Right ventricle myocardium superior (tissue), 1 donor: ENCODE measurements at regions of chr16 and their contacts with region 1.

Region 1: DNA sequence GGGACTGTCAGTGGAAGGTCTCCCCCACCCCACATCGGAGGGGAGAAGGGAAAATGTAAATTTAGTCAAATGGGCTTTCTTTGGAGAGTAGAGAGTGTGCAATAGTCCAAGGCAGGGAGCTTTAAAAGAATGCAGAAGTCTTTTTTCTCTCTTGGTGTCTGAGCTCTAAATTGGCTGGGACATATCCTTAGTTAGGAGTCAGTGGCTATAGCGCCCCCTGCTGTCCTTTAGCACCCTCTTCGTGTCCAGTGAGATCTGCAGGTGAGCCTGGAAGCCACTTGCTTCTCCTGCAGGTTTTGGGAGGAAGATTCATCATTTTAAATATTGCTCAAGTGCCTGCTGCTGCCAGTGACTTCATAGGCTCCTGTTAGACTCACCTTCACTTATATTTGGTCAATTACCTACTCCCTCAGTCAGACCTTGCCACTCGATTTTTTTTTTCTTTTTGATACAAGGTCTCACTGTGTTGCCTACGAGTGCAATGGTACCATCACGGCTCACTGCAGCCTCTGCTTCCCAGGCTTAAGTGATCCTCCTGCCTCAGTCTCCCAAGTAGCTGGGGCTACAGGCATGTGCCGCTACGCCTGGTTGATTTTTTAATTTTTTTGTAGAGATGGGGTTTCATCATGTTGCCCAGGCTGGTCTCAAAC is 174.8 kb downstream of the PRKCB start:
- DNase-seq: peak; percentile 83
- ATAC-seq: peak; percentile 75

Region 2: DNA sequence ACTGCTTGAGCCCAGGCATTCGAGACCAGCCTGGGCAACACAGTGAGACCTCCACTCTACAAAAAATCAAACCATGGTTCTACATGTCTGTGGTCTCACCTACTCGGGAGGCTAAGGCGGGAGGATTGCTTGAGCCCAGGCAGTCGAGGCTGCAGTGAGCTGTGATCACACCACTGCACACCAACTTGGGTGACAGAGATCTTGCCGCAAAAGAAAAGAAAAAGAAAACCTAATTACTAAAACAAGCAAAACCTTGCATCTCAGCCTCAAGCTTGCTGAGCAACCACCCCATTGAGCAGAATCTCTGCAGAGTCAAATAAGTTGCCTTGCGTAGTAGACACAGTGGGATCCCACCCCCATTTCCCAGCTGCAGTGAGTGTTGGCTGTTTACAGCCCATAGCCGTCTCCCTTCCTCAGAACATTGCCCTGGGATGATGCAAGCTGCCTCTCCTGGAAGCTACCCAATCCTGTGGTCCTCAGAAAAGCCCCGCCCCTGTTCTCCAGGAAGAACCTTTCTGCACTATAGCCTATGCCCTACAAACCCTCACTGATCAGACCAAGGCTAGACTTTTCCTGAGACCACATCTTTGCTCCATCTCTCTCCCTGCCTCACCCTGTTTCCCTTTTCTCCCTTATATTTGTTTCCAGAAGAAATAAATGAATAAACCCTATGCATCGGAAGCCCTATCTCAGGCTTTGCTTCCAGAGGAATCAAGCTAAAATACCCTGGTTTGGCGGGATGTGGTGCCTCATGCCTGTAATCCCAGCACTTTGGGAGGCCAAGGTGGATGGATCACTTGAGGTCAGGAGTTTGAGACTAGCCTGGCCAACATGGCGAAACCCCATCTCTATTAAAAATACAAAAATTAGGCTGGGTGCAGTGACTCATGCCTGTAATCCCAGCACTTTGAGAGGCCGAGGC is 280.8 kb before region 1 on chr16:
- intact Hi-C with region 1: loop called (anchors 5 kb)
- DNase-seq: no peak
- ATAC-seq: no peak

Region 3: GRCh38 chr16:23807028-23807427 is 203.5 kb before region 1 on chr16:
- intact Hi-C with region 1: loop called (anchors 10 kb)
- DNase-seq: no peak
- ATAC-seq: no peak